IMR-90 (cell line): ENCODE measurements at regions of chr17 and their contacts with region 1.

Region 1: DNA sequence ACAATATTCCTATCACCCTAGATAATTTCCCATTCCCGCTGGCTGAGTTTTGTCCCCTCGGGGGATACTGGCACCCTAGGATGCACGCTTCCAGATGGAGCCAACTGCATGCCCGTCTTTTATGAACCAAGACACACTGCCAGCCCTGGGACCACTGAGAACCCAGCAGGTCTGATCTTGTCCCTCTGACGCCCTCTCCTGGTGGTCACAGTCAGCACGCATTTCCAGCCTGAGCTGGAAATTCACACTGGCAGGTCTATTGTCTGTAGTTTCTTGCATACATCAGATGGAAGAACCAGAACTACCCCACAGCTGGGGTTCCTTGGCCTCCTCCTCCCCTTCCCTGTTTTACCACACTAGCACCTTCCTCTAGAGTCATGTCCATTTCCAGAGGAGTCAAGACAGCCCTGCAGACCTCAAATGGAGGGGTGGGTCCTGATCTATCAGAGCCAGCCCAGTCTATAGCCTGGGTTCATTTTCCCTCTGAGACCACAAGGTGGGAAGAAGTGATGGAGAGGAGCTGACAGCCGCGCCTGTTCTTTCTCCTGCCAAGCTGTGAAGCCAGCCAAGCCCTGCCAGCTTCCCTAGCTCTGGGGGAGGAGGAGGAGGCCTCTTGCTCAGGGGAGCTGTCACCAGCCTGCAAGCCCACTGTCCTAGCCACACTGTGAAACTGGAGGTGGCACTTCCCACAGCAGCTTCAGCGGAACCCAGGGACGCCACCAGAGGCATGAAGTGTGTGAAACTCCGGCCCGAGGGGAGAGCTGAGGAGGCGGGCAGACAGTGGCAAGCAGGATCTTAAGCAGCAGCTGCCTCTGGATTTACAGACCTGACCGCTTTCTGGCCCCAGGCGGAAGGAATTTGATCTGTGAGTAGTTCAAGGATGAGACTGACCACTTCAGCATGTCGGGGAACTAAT is 29.3 kb downstream of the MXRA7 start:
- DNase-seq: peak; percentile 63
- ATAC-seq: peak; percentile 78
- H3K4me3 ChIP-seq: no peak overlapping the region
- H3K27ac ChIP-seq: no peak overlapping the region
- H3K4me1 ChIP-seq: peaks cover 7% of the 10 kb centered on the region
- H3K27me3 ChIP-seq: no peaks in the 10 kb centered on the region
- CTCF ChIP-seq: peak; percentile 78
- POLR2A ChIP-seq: peak; percentile 23; the same call in 1 of the 2 replicates
- RAD21 ChIP-seq: peak; percentile 79

Region 2: GRCh38 chr17:78600181-78600721 is 1918.8 kb after region 1 on chr17:
- CTCF ChIA-PET with region 1: no interaction called
- POLR2A ChIA-PET with region 1: no interaction called
- dilution Hi-C with region 1: no loop called
- in situ Hi-C with region 1: no loop called
- intact Hi-C with region 1: loop called (anchors 10 kb)
- DNase-seq: no peak
- ATAC-seq: no peak
- H3K4me3 ChIP-seq: no peak overlapping the region
- H3K27ac ChIP-seq: no peak overlapping the region
- H3K4me1 ChIP-seq: peaks cover 8% of the 10 kb centered on the region
- H3K27me3 ChIP-seq: peaks cover 10% of the 10 kb centered on the region; the same call in 1 of the 2 replicates
- CTCF ChIP-seq: no peak
- POLR2A ChIP-seq: no peak
- RAD21 ChIP-seq: no peak